Heart left ventricle (tissue), 16 donors: ENCODE measurements at regions of chr19 and their contacts with region 1.

Region 1: DNA sequence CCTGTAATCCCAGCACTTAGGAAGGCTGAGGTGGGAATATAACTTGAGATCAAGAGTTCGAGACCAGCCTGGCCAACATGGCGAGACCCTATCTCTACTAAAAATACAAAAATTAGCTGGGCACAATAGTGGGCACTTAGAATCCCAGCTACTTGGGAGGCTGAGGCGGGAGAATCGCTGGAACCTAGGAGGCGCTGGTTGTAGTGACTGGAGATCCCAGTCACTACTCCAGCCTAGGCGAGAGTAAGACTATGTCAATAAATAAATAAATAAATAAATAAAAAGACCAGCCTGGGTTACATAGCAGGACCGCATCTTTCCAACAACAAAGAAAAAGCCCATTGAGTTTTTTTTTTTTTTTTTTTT is 2.1 kb upstream of the DOT1L start:
- DNase-seq: no peak
- ATAC-seq: no peak
- H3K4me3 ChIP-seq: no peak overlapping the region
- H3K27ac ChIP-seq: no peak overlapping the region
- H3K4me1 ChIP-seq: peaks cover 2 to 31% (median 21%) of the 10 kb centered on the region in 12 donors
- H3K27me3 ChIP-seq: no peaks in the 10 kb centered on the region
- CTCF ChIP-seq: no peak
- POLR2A ChIP-seq: no peak

Region 2: GRCh38 chr19:2087012-2087620 is 74.6 kb before region 1 on chr19:
- intact Hi-C with region 1: no loop called
- DNase-seq: no peak
- ATAC-seq: no peak
- H3K4me3 ChIP-seq: no peak overlapping the region
- H3K27ac ChIP-seq: peak overlapping the region in 1 of 12 donors; percentile 92
- H3K4me1 ChIP-seq: peaks cover 4 to 99% (median 31%) of the 10 kb centered on the region in 12 donors
- H3K27me3 ChIP-seq: no peaks in the 10 kb centered on the region
- CTCF ChIP-seq: no peak
- POLR2A ChIP-seq: no peak

Region 3: GRCh38 chr19:2101417-2102335 is 60.0 kb before region 1 on chr19:
- intact Hi-C with region 1: no loop called
- DNase-seq: no peak
- ATAC-seq: no peak
- H3K4me3 ChIP-seq: no peak overlapping the region
- H3K27ac ChIP-seq: no peak overlapping the region
- H3K4me1 ChIP-seq: peaks cover 0 to 11% (median 8%) of the 10 kb centered on the region in 12 donors
- H3K27me3 ChIP-seq: no peaks in the 10 kb centered on the region
- CTCF ChIP-seq: no peak
- POLR2A ChIP-seq: no peak

Region 4: DNA sequence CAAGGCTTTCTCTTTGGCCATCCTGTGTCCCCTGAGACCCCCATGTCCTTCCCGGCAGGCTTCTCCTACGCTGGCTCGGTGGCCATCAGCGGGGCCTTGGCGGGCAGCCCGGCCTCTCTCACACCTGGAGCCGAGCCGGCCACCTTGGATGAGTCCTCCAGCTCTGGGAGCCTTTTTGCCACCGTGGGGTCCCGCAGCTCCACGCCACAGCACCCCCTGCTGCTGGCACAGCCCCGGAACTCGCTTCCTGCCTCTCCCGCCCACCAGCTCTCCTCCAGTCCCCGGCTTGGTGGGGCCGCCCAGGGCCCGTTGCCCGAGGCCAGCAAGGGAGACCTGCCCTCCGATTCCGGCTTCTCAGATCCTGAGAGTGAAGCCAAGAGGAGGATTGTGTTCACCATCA is 60.2 kb after region 1 on chr19:
- intact Hi-C with region 1: no loop called
- DNase-seq: no peak
- ATAC-seq: no peak
- H3K4me3 ChIP-seq: no peak overlapping the region
- H3K27ac ChIP-seq: no peak overlapping the region
- H3K4me1 ChIP-seq: peaks cover 0 to 11% (median 0%) of the 10 kb centered on the region in 12 donors
- H3K27me3 ChIP-seq: no peaks in the 10 kb centered on the region
- CTCF ChIP-seq: peak in 9 of 12 donors; percentile 6 to 34 (median 17)
- POLR2A ChIP-seq: no peak

Region 5: DNA sequence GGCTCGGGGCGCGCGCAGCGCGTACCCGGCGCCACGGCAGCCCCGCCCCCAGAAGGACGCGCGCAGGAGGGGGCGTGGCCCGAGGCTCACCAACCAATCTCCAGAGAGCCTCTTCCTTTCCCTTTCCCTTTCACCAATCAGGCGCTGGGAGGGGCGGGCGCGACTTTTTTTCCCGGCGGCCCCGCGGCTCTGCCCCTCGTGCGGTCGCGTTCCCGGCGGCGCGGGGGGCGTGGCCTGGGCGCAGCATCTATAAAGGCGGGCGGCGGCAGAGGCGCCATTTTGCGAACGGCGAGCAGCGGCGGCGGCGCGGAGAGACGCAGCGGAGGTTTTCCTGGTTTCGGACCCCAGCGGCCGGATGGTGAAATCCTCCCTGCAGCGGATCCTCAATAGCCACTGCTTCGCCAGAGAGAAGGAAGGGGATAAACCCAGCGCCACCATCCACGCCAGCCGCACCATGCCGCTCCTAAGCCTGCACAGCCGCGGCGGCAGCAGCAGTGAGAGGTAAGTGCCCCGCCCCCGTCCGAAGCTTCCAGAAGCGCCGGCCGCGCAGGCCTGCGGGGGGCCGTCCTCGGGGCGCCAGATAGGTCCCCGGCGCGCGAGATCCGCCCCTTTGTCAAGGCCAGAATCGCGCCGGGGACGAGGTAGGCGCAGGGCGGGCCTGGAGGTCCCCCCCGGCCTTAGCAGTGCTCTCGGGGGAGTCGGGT is 107.7 kb after region 1 on chr19:
- intact Hi-C with region 1: loop called in 5 of 10 experiments (anchors 1 to 10 kb)
- DNase-seq: peak; percentile 98 to 100 (median 99)
- ATAC-seq: peak; percentile 89 to 92 (median 91)
- H3K4me3 ChIP-seq: peak overlapping the region; percentile 87 to 100 (median 98)
- H3K27ac ChIP-seq: peak overlapping the region; percentile 91 to 100 (median 99)
- H3K4me1 ChIP-seq: peaks cover 9 to 73% (median 42%) of the 10 kb centered on the region in 12 donors
- H3K27me3 ChIP-seq: no peaks in the 10 kb centered on the region
- CTCF ChIP-seq: no peak
- POLR2A ChIP-seq: peak; percentile 100